Tibial artery (tissue), 4 donors: ENCODE measurements at regions of chr1 and their contacts with region 1.

Region 1: GRCh38 chr1:70718086-70718630 is 307.1 kb downstream of the CTH start:
- DNase-seq: no peak
- H3K4me3 ChIP-seq: no peak overlapping the region
- H3K27ac ChIP-seq: peak overlapping the region in 1 of 2 donors; percentile 49
- H3K4me1 ChIP-seq: peaks cover 3 to 44% (median 12%) of the 10 kb centered on the region in 4 donors
- H3K27me3 ChIP-seq: no peaks in the 10 kb centered on the region
- CTCF ChIP-seq: no peak

Region 2: DNA sequence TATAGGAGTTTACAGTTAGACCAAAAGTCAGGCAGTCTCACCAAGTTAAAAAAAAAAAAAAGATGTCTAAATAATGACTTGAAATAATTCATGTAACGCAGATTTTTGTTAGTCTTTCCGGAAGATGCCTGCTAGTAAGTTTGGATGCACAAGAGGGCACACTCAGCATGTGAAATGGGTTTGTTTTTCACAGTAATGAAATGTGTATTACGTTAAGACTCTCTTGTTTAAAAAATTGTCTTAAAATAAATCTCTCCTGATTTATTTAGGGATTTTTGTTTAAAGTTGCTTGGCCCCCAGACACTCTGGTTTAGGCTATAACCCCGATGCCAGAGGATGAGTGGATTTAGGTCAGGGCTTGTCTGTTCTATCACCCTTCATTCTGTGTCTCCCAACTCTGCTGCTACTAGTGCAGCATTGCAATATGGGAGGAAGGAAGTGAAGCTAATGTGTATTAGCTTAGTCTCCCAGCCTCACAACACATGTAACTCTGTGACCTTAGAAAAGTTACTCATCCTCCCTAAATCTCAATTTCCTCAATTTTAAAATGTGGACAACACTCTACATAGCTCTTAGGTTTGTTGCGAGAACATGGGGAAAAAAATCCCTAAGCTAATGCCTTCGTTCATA is 281.4 kb before region 1 on chr1:
- intact Hi-C with region 1: no loop called
- DNase-seq: no peak
- H3K4me3 ChIP-seq: no peak overlapping the region
- H3K27ac ChIP-seq: no peak overlapping the region
- H3K4me1 ChIP-seq: no peaks in the 10 kb centered on the region
- H3K27me3 ChIP-seq: no peaks in the 10 kb centered on the region
- CTCF ChIP-seq: no peak

Region 3: GRCh38 chr1:70896224-70896623 is 178.1 kb after region 1 on chr1:
- intact Hi-C with region 1: loop called (anchors 10 kb)
- DNase-seq: no peak
- H3K4me3 ChIP-seq: no peak overlapping the region
- H3K27ac ChIP-seq: no peak overlapping the region
- H3K4me1 ChIP-seq: peaks cover 0 to 24% (median 5%) of the 10 kb centered on the region in 4 donors
- H3K27me3 ChIP-seq: no peaks in the 10 kb centered on the region
- CTCF ChIP-seq: no peak